ENCODE measurements at regions of chr12 and their contacts with region 1.

Region 1: GRCh38 chr12:69157023-69157655 is 82.2 kb upstream of the CPSF6 start:
- DNase-seq: peak; percentile 97
- ATAC-seq: peak; percentile 83
- H3K4me3 Mint-ChIP-seq: peak overlapping the region; percentile 42
- H3K27ac Mint-ChIP-seq: peak overlapping the region; percentile 58
- H3K4me1 Mint-ChIP-seq: peaks cover 55% of the 10 kb centered on the region
- H3K27me3 Mint-ChIP-seq: no peaks in the 10 kb centered on the region

Region 2: GRCh38 chr12:68865399-68866164 is 291.6 kb before region 1 on chr12:
- CTCF ChIA-PET with region 1: interaction called, 3 read pairs
- POLR2A ChIA-PET with region 1: no interaction called
- intact Hi-C with region 1: loop called (anchors 2 to 5 kb)
- DNase-seq: no peak
- ATAC-seq: no peak
- H3K4me3 Mint-ChIP-seq: no peak overlapping the region
- H3K27ac Mint-ChIP-seq: peak overlapping the region; percentile 19
- H3K4me1 Mint-ChIP-seq: peaks cover 8% of the 10 kb centered on the region
- H3K27me3 Mint-ChIP-seq: no peaks in the 10 kb centered on the region

Region 3: DNA sequence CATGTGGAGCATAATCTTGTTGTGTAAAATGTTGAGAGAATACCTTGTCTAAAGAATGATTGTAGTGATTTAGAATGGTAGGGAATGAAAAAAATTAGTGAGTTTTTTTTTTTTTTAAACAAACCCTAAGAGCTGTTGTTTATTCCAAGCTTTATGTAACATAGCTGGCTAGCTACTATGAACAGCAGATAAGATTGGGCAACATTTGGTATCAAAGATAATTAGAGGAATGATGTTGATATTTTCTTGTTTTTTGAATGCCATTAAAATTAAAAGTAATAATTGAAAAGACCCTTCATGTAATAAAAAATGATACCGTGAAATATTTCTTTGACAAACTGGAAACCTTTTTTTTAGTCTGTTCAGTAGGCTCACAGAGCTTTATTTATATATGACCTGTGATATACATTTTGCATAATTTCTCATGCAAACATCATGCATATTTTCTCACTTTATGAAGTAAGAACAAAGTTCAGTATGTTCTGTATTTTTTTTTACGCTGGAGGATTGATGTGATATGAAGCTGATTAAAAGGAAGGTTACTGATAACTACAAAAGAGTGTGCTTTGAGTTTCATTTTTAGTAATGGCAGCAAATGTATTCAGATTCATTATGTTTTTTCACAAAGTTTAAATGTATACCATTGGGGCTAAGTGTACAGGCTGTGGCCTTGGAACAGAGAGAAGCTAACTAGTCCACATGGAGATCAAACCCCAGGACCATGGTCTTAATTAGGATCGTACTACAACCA is 90.3 kb after region 1 on chr12:
- CTCF ChIA-PET with region 1: interaction called, 99 read pairs
- POLR2A ChIA-PET with region 1: interaction called, 5 read pairs
- intact Hi-C with region 1: no loop called
- DNase-seq: no peak
- ATAC-seq: peak; percentile 47
- H3K4me3 Mint-ChIP-seq: peak overlapping the region; percentile 8
- H3K27ac Mint-ChIP-seq: peak overlapping the region; percentile 69
- H3K4me1 Mint-ChIP-seq: peaks cover 72% of the 10 kb centered on the region
- H3K27me3 Mint-ChIP-seq: no peaks in the 10 kb centered on the region

Region 4: GRCh38 chr12:69330475-69331473 is 173.6 kb after region 1 on chr12:
- CTCF ChIA-PET with region 1: interaction called, 5 read pairs
- POLR2A ChIA-PET with region 1: no interaction called
- intact Hi-C with region 1: loop called (anchors 2 to 10 kb)
- DNase-seq: peak; percentile 72
- ATAC-seq: peak; percentile 78
- H3K4me3 Mint-ChIP-seq: peak overlapping the region; percentile 72
- H3K27ac Mint-ChIP-seq: peak overlapping the region; percentile 82
- H3K4me1 Mint-ChIP-seq: peaks cover 36% of the 10 kb centered on the region
- H3K27me3 Mint-ChIP-seq: no peaks in the 10 kb centered on the region

Region 5: DNA sequence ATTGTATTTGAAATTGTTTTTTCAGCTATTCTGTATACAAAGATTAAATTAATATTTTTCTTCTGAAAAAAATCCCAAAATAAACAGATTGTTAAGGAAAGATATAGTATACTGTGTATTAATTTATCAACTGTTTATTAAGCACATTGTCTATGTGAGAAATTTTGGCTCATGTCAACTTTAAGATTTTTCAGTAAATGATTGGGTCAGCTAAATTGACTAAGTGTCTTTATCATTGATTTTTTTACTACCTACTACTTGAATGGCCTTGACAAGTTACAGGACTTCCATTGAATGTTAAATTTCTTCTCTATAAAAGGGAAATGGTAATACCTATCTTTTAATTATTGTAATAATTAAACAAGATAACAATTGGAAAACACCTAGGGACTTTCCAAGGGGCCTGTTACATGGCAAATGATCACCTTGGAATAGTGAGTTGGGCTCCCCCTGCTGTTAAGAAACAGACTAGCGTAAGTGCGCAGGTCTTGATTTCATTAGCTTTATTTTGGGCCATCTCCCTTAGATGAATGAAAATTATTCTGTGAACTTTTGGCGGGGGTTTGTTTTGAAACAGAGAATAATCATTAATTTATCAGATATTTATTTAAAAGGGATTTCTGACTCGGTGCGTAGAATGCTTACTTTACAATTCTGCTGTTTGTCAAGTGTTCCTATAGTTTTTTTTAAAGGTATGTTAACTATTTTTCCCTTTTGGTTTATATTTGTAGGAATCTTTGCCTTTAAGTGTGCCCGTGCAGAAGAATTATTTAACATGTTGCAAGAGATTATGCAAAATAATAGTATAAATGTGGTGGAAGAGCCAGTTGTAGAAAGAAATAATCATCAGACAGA is 413.6 kb after region 1 on chr12:
- CTCF ChIA-PET with region 1: interaction called, 3 read pairs
- POLR2A ChIA-PET with region 1: no interaction called
- intact Hi-C with region 1: loop called (anchors 2 kb)
- DNase-seq: peak; percentile 67
- ATAC-seq: peak; percentile 86
- H3K4me3 Mint-ChIP-seq: no peak overlapping the region
- H3K27ac Mint-ChIP-seq: no peak overlapping the region
- H3K4me1 Mint-ChIP-seq: peaks cover 16% of the 10 kb centered on the region
- H3K27me3 Mint-ChIP-seq: no peaks in the 10 kb centered on the region

Region 6: DNA sequence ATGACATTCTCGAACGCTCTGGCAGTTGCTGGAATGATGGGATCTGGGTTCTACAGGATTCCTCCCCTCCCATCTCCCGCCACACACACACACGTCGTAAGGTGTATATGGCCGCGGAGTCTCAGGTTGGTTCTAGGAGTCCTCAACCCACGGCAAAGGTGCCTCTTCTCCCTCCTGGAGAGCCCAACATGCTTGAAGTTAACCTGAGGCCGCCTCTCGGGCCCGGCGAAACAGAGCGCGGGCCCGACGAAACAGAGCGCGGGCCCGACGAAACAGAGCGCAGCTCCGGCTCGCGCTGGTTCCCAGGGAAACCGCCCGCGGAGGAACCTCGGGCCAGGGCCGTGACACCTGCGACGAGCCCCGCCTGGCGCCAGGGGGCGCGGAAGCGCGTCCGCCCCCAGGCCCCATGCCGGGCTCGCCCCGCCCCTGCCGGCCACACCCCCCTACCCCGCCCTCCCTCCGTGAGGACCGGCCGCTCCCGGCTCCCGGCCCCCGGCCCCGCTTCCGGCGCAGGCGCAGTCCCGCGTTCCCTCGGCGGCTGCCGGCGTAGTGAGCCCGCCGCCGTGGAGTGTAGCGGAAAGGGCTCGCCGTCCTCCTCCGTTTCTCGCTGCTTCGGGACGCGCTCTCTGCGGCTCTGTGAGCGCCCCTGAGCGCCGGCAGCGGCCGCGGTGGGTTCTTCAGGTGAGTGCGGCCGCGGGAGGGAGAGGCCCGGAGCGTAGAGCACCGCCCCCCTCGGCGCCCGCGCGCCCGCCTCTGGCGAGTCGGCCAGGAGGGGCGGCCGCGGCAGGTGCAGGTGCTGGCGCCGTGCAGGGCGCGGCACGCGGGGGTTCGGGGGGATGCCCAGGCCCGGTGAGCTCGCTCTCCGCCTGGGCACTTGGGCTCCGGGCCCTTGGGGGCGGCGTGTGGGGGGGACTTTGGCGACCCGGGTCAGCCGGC is 581.5 kb after region 1 on chr12 and contains the start of gene RAB3IP:
- CTCF ChIA-PET with region 1: interaction called, 3 read pairs
- POLR2A ChIA-PET with region 1: no interaction called
- intact Hi-C with region 1: loop called in 1 of 2 experiments (anchors 2 kb)
- DNase-seq: peak; percentile 97
- ATAC-seq: peak; percentile 88
- H3K4me3 Mint-ChIP-seq: peak within 1 kb of the TSS; percentile 79
- H3K27ac Mint-ChIP-seq: peak within 1 kb of the TSS; percentile 75
- H3K4me1 Mint-ChIP-seq: peaks cover 26% of the 10 kb centered on the region
- H3K27me3 Mint-ChIP-seq: peaks cover 10% of the 10 kb centered on the region
- total RNA-seq, gene RAB3IP: 30.7 to 39.9 TPM

Measured in activated CD4-positive, alpha-beta T cell treated with anti-CD3 and anti-CD28 coated beads for 36 hours (primary cell).